Thyroid gland (tissue), 4 donors: ENCODE measurements at regions of chr1 and their contacts with region 1.

Region 1: DNA sequence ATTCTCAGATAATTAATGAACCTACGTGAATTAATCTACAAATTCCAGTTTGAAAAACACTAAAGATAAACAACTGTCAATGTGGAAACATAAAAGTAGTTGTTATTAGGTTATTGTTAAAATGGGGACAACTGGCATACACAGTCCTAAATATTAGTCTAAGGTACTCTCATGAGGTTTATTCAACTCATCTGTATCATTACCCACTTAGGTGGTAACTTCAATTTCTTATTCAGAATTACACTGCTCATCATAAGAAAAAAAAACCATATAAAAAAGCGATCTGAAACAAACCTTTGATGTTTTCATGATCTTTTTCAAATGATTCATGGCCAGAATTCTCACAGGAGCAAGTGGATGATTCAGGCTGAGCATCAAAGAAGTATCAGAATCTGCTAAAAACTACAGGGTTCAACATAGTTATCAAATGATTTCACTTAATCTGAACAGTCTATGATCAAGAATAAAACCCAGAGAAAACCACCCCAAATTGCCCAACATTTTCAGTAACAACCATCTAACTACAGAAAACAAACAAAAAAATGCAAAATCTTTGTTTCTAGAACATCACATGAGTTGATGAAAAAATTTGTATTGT is 13.7 kb downstream of the HEATR1 start:
- DNase-seq: no peak
- H3K4me3 ChIP-seq: no peak overlapping the region
- H3K27ac ChIP-seq: no peak overlapping the region
- H3K4me1 ChIP-seq: no peaks in the 10 kb centered on the region
- H3K27me3 ChIP-seq: no peaks in the 10 kb centered on the region
- CTCF ChIP-seq: no peak
- POLR2A ChIP-seq: no peak

Region 2: DNA sequence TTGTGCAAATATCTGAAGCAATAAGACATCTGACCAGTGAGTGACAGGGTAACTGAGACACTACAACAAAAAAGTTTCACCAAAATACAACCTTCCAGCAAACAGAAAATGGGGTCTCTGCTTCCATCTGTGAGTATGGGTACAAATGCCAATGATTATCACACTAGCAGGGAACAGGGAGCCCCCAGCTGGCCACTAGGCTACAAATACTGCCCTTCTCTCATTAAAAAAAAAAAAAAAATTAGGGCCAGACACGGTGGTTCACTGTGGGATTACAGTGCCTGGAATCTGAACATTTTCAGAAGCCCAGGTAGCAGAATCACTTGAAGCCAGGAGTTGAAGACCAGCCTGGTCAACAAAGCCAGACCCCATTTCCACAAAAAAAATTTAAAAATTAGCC is 244.9 kb before region 1 on chr1:
- intact Hi-C with region 1: no loop called
- DNase-seq: peak; percentile 22 to 23
- H3K4me3 ChIP-seq: no peak overlapping the region
- H3K27ac ChIP-seq: no peak overlapping the region
- H3K4me1 ChIP-seq: no peaks in the 10 kb centered on the region
- H3K27me3 ChIP-seq: no peaks in the 10 kb centered on the region
- CTCF ChIP-seq: peak in 4 of 6 experiments; percentile 4 to 42 (median 28)
- POLR2A ChIP-seq: no peak

Region 3: GRCh38 chr1:236425031-236425663 is 165.5 kb before region 1 on chr1:
- intact Hi-C with region 1: no loop called
- DNase-seq: no peak
- H3K4me3 ChIP-seq: no peak overlapping the region
- H3K27ac ChIP-seq: no peak overlapping the region
- H3K4me1 ChIP-seq: peaks cover 6 to 8% of the 10 kb centered on the region in 2 donors
- H3K27me3 ChIP-seq: no peaks in the 10 kb centered on the region
- CTCF ChIP-seq: no peak
- POLR2A ChIP-seq: no peak

Region 4: DNA sequence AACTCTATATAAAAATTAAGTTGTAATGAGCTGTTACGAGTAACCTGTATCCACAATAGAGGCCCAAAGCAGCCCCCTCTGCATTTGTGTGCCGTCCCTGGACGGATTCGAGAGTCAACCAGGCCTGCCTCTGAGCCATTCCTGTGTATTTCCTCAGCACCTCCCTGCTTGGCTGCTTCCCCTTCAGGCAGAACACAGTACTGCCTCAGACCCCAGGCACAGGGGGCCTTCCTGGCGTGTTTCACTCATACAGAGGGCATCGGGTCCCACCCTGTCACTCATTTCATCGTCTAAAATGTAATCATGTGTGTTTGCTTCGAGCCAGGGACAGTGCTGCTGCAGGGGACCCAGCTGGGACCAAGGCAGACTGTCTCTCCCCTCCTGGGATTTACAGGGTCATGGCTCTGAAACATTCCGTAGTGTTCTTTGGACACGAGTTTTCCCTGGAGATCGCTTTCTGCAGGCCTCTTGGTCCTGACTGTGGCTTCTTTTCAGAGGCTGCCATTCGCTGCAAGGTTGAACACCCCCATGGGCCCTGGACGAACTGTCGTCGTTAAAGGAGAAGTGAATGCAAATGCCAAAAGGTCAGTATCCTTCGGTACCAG is 47.5 kb before region 1 on chr1:
- intact Hi-C with region 1: loop called (anchors 10 kb)
- DNase-seq: no peak
- H3K4me3 ChIP-seq: no peak overlapping the region
- H3K27ac ChIP-seq: no peak overlapping the region
- H3K4me1 ChIP-seq: no peaks in the 10 kb centered on the region
- H3K27me3 ChIP-seq: no peaks in the 10 kb centered on the region
- CTCF ChIP-seq: no peak
- POLR2A ChIP-seq: no peak